H1 (cell line): ENCODE measurements at regions of chr22 and their contacts with region 1.

Region 1: DNA sequence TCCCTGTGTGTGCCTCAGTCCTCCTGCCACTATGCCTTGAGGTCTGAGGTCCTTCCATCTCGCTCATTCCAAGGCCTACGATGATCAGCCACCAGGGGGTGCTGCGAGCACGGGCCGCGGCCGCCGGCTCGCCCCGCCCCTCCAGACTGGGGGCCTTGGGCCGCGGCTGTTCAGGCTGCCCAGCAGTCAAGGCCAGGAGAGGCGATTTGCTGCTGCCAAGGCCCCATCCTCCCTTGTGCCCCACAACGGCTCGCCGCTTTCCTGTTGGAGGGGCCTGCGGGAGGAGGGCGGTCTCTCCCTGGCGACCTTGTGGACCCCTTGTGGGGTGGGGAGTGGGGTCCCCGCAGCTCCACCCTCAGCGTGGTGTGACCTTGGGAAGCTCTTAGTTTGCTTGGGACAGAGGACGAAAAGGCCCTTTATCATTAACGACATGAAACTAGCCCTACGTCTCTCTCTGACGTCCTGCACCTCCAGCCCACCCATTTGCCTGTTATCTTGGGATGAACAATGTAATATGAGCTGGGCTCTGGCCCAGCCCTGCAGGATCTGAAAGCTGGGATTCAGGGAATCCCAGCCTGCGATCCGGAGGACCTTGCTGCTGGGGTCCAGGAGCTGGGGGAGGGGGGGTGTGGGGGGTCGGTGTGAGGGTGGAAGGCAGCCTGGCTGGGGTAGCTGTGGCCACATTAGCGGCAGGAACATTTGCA is 5.3 kb upstream of the GALR3 start:
- DNase-seq: peak in 1 of 2 experiments; percentile 99
- H3K4me3 ChIP-seq: peak overlapping the region; percentile 35 to 60 (median 47)
- H3K27ac ChIP-seq: peak overlapping the region; percentile 44; the same call in 1 of the 2 replicates
- H3K4me1 ChIP-seq: peaks cover 3 to 25% (median 19%) of the 10 kb centered on the region in 4 experiments
- H3K27me3 ChIP-seq: peaks cover 0 to 23% (median 20%) of the 10 kb centered on the region in 4 experiments; a peak in 6 of 7 replicates
- CTCF ChIP-seq: peak; percentile 90 to 94 (median 93)
- EP300 ChIP-seq: no peak
- POLR2A ChIP-seq: peak in 1 of 2 experiments; percentile 60; a peak in 1 of 3 replicates
- RAD21 ChIP-seq: peak; percentile 91 to 92

Region 2: GRCh38 chr22:37792494-37792893 is 25.4 kb before region 1 on chr22:
- CTCF ChIA-PET with region 1: no interaction called
- POLR2A ChIA-PET with region 1: no interaction called
- DNase-seq: no peak
- H3K4me3 ChIP-seq: no peak overlapping the region
- H3K27ac ChIP-seq: no peak overlapping the region
- H3K4me1 ChIP-seq: no peaks in the 10 kb centered on the region
- H3K27me3 ChIP-seq: peaks cover 0 to 6% (median under 1%) of the 10 kb centered on the region in 4 experiments; a peak in 2 of 7 replicates
- CTCF ChIP-seq: no peak
- EP300 ChIP-seq: no peak
- POLR2A ChIP-seq: no peak
- RAD21 ChIP-seq: no peak

Region 3: DNA sequence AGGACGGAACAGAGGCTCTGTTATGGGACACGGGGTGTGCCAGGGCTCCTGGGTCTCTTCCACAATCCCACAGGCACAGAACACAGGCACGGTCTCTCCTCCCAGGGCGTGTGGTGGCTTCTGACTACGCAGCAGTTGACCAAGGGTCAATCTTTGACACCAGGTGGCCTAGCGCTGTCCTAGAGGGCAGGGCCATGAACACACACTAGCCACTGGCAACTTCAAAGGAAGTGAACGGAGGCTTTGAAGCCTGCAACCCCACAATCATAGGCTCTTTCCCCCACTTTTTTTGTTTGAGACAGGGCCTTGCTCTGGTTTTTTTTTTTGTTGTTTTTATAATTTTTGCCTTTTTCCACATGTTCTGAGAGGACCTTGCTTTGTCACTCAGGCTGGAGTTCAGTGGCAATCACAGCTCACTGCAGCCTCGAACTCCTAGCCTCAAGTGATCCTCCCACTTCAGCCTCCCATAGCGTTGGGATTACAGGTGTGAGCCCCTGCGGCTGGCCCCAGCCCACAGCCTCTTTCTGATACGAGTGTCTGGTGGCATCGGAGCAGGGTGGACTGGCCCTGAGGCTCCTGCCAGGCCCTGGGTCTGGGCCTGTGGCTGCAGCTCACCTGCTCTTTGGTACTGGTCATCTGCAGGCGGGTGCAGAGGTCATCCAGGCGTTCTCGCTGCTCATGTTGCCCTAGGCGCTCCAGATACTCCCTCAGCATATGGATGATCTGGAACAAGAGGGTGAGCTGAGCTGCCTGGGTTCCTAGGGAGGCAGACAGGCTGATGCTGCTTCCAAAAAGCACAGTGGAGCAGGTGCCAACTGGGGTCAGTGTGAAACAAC is 14.4 kb after region 1 on chr22:
- CTCF ChIA-PET with region 1: interaction called, 15 read pairs
- POLR2A ChIA-PET with region 1: interaction called, 7 read pairs
- DNase-seq: no peak
- H3K4me3 ChIP-seq: no peak overlapping the region
- H3K27ac ChIP-seq: no peak overlapping the region
- H3K4me1 ChIP-seq: no peaks in the 10 kb centered on the region
- H3K27me3 ChIP-seq: no peaks in the 10 kb centered on the region
- CTCF ChIP-seq: no peak
- EP300 ChIP-seq: no peak
- POLR2A ChIP-seq: no peak
- RAD21 ChIP-seq: no peak

Region 4: DNA sequence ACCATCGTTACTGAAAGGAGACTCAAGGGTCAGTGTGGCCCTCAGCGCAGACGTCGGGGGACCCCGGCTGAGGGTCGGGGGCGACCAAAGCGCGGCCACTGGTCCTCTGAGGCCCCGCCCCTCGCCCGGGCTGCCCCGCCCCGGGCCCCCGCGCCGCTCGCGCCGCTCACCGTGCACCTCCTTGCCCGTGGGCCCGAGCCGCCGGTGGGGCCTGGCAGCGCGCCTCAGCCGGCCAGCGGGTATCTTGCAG is 25.8 kb after region 1 on chr22:
- CTCF ChIA-PET with region 1: interaction called, 19 read pairs
- POLR2A ChIA-PET with region 1: interaction called, 29 read pairs
- DNase-seq: no peak
- H3K4me3 ChIP-seq: peak overlapping the region; percentile 61 to 82 (median 67)
- H3K27ac ChIP-seq: 0 out of 2 replicates have a peak overlapping the region, but pooled peaks have one; percentile 47
- H3K4me1 ChIP-seq: peaks cover 0 to 2% (median 1%) of the 10 kb centered on the region in 4 experiments; a peak in 2 of 7 replicates
- H3K27me3 ChIP-seq: no peaks in the 10 kb centered on the region
- CTCF ChIP-seq: no peak
- EP300 ChIP-seq: no peak
- POLR2A ChIP-seq: no peak
- RAD21 ChIP-seq: no peak

Region 5: GRCh38 chr22:37849089-37849751 is 31.4 kb after region 1 on chr22 and contains the start of gene EIF3L:
- CTCF ChIA-PET with region 1: interaction called, 29 read pairs
- POLR2A ChIA-PET with region 1: interaction called, 29 read pairs
- DNase-seq: peak; percentile 68 to 90
- H3K4me3 ChIP-seq: peak within 1 kb of the TSS; percentile 96 to 99 (median 98)
- H3K27ac ChIP-seq: peak within 1 kb of the TSS; percentile 86
- H3K4me1 ChIP-seq: peaks cover 0 to 2% (median 2%) of the 10 kb centered on the region in 4 experiments; a peak in 3 of 7 replicates
- H3K27me3 ChIP-seq: no peaks in the 10 kb centered on the region
- CTCF ChIP-seq: no peak
- EP300 ChIP-seq: no peak
- POLR2A ChIP-seq: peak; percentile 89 to 98
- RAD21 ChIP-seq: no peak
- total RNA-seq, gene EIF3L: 622 and 639 TPM in 2 replicates

Region 6: GRCh38 chr22:37855462-37855861 is 37.6 kb after region 1 on chr22:
- CTCF ChIA-PET with region 1: interaction called, 29 read pairs
- POLR2A ChIA-PET with region 1: interaction called, 42 read pairs
- DNase-seq: no peak
- H3K4me3 ChIP-seq: no peak overlapping the region
- H3K27ac ChIP-seq: no peak overlapping the region
- H3K4me1 ChIP-seq: no peaks in the 10 kb centered on the region
- H3K27me3 ChIP-seq: no peaks in the 10 kb centered on the region
- CTCF ChIP-seq: no peak
- EP300 ChIP-seq: no peak
- POLR2A ChIP-seq: no peak
- RAD21 ChIP-seq: no peak